Activated CD4-positive, alpha-beta T cell treated with anti-CD3 and anti-CD28 coated beads, Interleukin-2, amount 10 ng/mL, durations not matched to agents 24 days and 14 days (primary cell): ENCODE measurements at regions of chr15 and their contacts with region 1.

Region 1: GRCh38 chr15:51731549-51732267 is 5.7 kb downstream of the LYSMD2 start:
- DNase-seq: peak; percentile 84
- H3K4me3 Mint-ChIP-seq: peak overlapping the region; percentile 79
- H3K27ac Mint-ChIP-seq: peak overlapping the region; percentile 86
- H3K4me1 Mint-ChIP-seq: peaks cover 66% of the 10 kb centered on the region
- H3K27me3 Mint-ChIP-seq: no peaks in the 10 kb centered on the region

Region 2: GRCh38 chr15:51681303-51681963 is 50.3 kb before region 1 on chr15 and contains the start of gene SCG3:
- intact Hi-C with region 1: loop called (anchors 1 kb)
- DNase-seq: peak; percentile 92
- H3K4me3 Mint-ChIP-seq: peak within 1 kb of the TSS; percentile 9
- H3K27ac Mint-ChIP-seq: no peak within 1 kb of the TSS
- H3K4me1 Mint-ChIP-seq: peaks cover 7% of the 10 kb centered on the region
- H3K27me3 Mint-ChIP-seq: peaks cover 41% of the 10 kb centered on the region
- total RNA-seq, gene SCG3: not detected in 2 replicates

Region 3: GRCh38 chr15:51793521-51794305 is 62.0 kb after region 1 on chr15:
- intact Hi-C with region 1: no loop called
- DNase-seq: no peak
- H3K4me3 Mint-ChIP-seq: no peak overlapping the region
- H3K27ac Mint-ChIP-seq: no peak overlapping the region
- H3K4me1 Mint-ChIP-seq: peaks cover 4% of the 10 kb centered on the region
- H3K27me3 Mint-ChIP-seq: peaks cover 5% of the 10 kb centered on the region